HCT116 (cell line): ENCODE measurements at regions of chr5 and their contacts with region 1.

Region 1: DNA sequence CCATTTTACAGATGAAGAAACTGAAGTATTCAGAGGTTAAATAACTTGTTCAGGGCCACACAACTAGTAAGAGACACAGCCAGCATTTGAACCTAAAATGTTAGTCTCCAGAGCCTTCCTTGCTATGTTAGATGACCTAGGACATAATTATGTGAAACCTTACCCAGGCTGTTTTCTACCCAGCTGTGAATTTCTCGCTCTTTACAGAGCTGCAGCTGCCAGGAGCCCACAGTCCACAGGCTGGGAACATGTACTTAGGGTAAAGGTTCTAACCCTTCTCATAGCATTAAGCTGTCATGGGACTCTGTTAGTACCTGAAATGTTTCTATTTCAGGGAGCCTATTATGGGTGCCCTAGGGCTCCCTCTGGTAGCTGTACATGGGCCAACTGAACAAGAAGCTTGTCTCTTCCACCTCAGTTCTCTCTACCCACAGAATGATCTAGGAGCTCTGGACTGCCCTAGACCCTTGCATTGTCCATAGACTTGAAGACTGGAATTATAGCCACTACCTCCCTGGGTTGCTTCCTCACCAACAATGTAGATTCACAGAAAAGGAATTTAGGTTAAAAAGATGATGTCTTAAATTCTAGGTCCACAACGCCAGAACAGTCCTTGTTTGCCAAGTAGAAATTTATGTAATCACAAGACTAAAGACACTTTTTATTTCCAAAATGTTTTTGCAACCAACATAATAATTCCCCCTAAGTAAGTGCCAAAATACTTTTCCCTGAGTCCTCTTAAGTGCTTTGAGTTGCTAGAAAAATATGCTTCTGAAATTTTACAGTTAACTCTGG is 262.9 kb downstream of the PIK3R1 start:
- DNase-seq: no peak
- ATAC-seq: no peak
- H3K4me3 ChIP-seq: no peak overlapping the region
- H3K27ac ChIP-seq: no peak overlapping the region
- H3K4me1 ChIP-seq: no peaks in the 10 kb centered on the region
- H3K27me3 ChIP-seq: no peaks in the 10 kb centered on the region
- CTCF ChIP-seq: no peak
- POLR2A ChIP-seq: no peak
- RAD21 ChIP-seq: no peak

Region 2: DNA sequence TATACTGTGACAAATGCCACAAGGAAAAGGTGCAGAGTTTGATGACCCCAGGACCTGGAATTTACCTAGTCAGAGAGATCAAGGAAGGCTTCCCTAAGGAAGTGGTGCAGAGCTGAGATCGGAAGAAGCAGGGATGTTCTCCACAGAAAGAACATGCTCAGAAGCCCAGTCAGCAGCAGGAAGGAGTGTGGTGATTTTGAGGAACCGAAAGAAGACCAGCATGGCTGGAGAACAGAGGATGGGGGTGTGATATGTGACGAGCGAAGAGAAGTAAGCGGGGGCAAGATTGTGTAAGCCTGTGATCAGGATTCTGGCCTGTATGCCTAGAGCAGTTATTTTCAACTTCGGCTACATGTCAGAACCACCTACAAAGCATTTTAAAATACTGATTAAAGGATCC is 281.6 kb before region 1 on chr5:
- CTCF ChIA-PET with region 1: no interaction called
- POLR2A ChIA-PET with region 1: no interaction called
- RAD21 ChIA-PET with region 1: no interaction called
- intact Hi-C with region 1: no loop called
- DNase-seq: no peak
- ATAC-seq: no peak
- H3K4me3 ChIP-seq: no peak overlapping the region
- H3K27ac ChIP-seq: no peak overlapping the region
- H3K4me1 ChIP-seq: peaks cover 0 to 6% of the 10 kb centered on the region in 2 experiments; a peak in 2 of 4 replicates
- H3K27me3 ChIP-seq: no peaks in the 10 kb centered on the region
- CTCF ChIP-seq: no peak
- POLR2A ChIP-seq: no peak
- RAD21 ChIP-seq: no peak

Region 3: DNA sequence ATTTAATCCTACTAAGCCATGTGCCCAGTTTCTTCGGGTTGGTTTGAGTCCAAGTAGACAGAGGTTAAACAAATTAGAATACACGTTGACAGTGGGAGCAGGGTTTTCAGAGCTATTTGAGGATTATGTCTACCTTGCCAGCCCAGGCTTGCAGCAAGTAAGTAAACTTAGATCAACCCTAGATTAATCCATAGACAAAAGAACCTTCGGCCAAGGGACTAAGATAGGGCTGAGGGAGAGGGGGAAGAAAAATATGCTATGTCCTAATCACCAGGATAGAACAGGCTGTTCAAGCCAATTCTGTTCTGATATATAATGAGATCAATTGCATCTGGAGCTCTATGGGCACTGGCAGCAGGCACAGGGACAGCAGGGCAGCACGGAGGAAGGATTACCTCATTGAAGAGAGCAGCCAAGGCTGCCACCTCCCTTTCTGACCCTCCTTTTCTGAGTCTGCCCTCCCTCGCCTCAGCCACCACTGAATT is 114.7 kb after region 1 on chr5:
- CTCF ChIA-PET with region 1: no interaction called
- POLR2A ChIA-PET with region 1: no interaction called
- RAD21 ChIA-PET with region 1: no interaction called
- intact Hi-C with region 1: no loop called
- DNase-seq: no peak
- ATAC-seq: no peak
- H3K4me3 ChIP-seq: no peak overlapping the region
- H3K27ac ChIP-seq: no peak overlapping the region
- H3K4me1 ChIP-seq: no peaks in the 10 kb centered on the region
- H3K27me3 ChIP-seq: no peaks in the 10 kb centered on the region
- CTCF ChIP-seq: no peak
- POLR2A ChIP-seq: no peak
- RAD21 ChIP-seq: no peak

Region 4: DNA sequence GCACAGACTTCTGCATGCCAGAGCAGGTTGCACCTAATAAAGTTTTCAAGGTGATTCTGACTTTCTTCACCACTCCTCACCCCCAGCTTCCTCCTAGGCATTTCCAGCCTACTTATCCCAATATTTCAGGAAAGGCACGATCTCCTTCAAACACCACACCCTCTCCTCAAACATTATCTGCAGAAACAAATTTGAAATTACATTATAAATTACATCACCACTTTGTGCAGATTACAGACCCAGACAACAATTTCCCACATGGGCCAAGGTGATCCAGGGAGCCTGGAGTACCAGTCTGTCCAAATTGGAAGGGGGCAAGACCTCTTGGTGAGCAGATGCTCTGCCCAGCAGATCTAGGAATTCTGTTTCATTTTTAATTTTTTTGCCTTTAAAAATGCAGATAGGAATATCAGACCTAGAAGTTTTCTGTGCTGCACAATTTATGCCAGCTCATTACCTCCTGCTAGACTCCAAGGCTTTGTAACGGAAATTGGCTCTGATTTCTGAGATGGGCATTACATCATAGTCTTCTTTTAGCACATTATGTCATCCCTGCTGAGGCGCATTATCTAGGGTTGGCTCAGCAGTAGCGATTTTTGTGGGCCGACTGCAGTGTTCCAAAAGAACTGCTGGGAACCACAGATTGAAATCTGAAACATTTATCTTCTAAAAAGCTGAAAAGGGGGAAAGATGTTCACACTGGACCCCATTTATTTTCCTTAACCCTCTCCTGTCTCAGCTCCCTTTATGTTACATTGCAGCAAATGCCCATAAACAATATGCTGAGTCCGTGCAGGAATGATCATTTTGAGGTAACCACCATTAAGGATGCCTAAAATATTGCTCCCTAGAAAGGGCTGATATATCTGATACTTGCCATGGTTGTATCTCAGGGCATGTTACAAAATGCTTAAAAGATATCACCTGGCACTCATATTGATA is 252.1 kb after region 1 on chr5:
- CTCF ChIA-PET with region 1: no interaction called
- POLR2A ChIA-PET with region 1: no interaction called
- RAD21 ChIA-PET with region 1: no interaction called
- intact Hi-C with region 1: no loop called
- DNase-seq: no peak
- ATAC-seq: no peak
- H3K4me3 ChIP-seq: no peak overlapping the region
- H3K27ac ChIP-seq: no peak overlapping the region
- H3K4me1 ChIP-seq: no peaks in the 10 kb centered on the region
- H3K27me3 ChIP-seq: no peaks in the 10 kb centered on the region
- CTCF ChIP-seq: no peak
- POLR2A ChIP-seq: no peak
- RAD21 ChIP-seq: no peak

Region 5: GRCh38 chr5:68818057-68818695 is 339.7 kb after region 1 on chr5:
- CTCF ChIA-PET with region 1: no interaction called
- POLR2A ChIA-PET with region 1: no interaction called
- RAD21 ChIA-PET with region 1: no interaction called
- intact Hi-C with region 1: no loop called
- DNase-seq: no peak
- ATAC-seq: no peak
- H3K4me3 ChIP-seq: no peak overlapping the region
- H3K27ac ChIP-seq: no peak overlapping the region
- H3K4me1 ChIP-seq: no peaks in the 10 kb centered on the region
- H3K27me3 ChIP-seq: no peaks in the 10 kb centered on the region
- CTCF ChIP-seq: no peak
- POLR2A ChIP-seq: no peak
- RAD21 ChIP-seq: no peak

Region 6: DNA sequence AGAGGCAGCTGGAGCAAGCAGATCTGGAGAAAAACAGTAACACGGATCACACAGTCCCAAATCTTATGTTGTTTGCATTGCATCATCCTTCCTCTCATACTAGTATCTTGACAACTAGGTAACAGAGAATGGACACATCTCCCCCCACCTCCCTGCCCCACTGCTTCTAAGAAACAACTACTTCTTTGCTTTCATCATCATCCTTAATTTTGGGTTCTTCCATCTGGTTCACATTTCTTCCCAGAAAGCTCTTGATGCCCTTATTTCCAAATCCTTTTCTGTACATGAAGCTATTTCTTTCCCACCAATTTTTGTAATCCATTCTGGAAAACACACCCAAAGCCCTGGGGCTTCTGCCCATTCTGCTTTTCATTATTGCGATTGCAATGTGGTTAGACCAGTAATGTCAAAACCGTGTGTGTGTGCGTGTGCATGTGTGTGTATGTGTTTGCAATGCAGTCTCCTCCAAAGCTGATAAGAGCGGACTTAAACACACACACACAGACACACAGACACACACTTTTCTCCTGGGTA is 360.6 kb after region 1 on chr5:
- CTCF ChIA-PET with region 1: no interaction called
- POLR2A ChIA-PET with region 1: no interaction called
- RAD21 ChIA-PET with region 1: no interaction called
- intact Hi-C with region 1: loop called (anchors 10 kb)
- DNase-seq: no peak
- ATAC-seq: no peak
- H3K4me3 ChIP-seq: no peak overlapping the region
- H3K27ac ChIP-seq: no peak overlapping the region
- H3K4me1 ChIP-seq: no peaks in the 10 kb centered on the region
- H3K27me3 ChIP-seq: no peaks in the 10 kb centered on the region
- CTCF ChIP-seq: no peak
- POLR2A ChIP-seq: no peak
- RAD21 ChIP-seq: no peak